Activated CD8-positive, alpha-beta memory T cell treated with anti-CD3 and anti-CD28 coated beads, Interleukin-2, amount 10 ng/mL, durations not matched to agents 7 days and 5 days (primary cell): ENCODE measurements at regions of chr9 and their contacts with region 1.

Region 1: DNA sequence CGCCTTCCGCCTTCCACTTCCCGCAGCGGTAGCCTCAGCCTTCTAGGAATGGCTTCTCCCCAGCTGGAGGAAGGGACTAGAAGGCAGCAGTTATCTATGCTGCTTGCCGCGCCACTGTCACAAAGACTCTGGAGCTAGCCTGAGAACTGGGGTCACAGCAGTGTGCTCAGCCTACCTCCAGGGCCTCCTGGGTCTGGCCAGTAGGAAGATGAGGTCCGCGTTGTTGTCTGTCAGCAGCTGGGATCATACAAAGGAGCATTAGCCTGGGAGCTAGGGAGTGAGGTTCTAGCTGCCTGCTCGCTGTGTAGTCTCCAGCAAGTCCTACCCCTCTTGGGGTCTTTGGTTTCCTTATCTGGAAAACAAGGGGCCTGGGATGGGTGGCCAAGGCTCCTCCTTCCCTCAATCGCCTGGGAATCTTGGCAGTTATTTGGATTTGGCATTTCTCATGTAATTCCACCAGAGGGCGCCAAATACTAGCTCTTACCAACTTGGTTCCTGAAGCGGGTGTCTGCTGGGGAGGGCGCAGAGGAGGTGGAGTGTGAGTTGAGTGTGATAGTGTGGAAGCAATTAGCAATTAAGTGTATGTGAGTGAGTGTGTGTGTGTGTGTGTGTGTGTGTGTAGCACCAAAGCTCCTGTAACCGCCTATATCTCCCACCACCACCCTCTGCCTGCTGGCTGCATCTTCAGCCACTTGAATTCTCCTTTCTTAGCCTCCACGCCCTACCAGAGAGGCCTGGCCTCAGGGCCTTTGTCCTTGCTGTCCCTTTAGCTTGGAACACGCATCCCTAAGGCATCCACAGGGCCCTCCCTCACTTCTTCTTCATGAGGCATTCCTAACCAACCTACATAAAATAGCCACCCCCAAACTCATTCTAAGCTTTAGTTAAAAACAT is 97.1 kb downstream of the ENTREP1 start:
- DNase-seq: peak; percentile 51
- ATAC-seq: peak; percentile 47
- H3K4me3 Mint-ChIP-seq: no peak overlapping the region
- H3K27ac Mint-ChIP-seq: no peak overlapping the region
- H3K4me1 Mint-ChIP-seq: no peaks in the 10 kb centered on the region
- H3K27me3 Mint-ChIP-seq: peaks cover 2% of the 10 kb centered on the region

Region 2: DNA sequence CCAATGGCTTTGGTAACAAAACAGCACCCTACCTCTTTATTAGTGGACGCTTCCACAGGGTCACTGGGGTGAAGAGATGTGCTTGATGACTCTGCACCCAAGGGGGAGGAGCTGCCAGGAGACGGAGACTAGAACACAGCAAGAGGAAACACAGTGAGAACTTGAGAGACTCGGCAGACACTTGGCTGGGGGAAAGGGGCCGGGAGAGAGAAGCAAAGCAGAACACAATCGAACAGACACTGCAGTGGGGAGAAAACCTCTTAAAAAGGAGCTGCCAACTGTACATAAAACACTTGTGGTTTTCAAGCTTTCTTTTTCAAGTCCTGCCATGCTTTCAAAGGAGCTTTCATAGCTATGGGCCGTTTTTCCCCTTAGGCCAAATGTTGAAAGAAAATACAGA is 53.9 kb after region 1 on chr9:
- CTCF ChIA-PET with region 1: no interaction called
- DNase-seq: no peak
- ATAC-seq: peak; percentile 45
- H3K4me3 Mint-ChIP-seq: no peak overlapping the region
- H3K27ac Mint-ChIP-seq: no peak overlapping the region
- H3K4me1 Mint-ChIP-seq: peaks cover 12% of the 10 kb centered on the region
- H3K27me3 Mint-ChIP-seq: peaks cover 20% of the 10 kb centered on the region

Region 3: GRCh38 chr9:69549310-69550202 is 127.4 kb after region 1 on chr9:
- CTCF ChIA-PET with region 1: interaction called, 21 read pairs
- DNase-seq: no peak
- ATAC-seq: no peak
- H3K4me3 Mint-ChIP-seq: no peak overlapping the region
- H3K27ac Mint-ChIP-seq: no peak overlapping the region
- H3K4me1 Mint-ChIP-seq: peaks cover 1% of the 10 kb centered on the region
- H3K27me3 Mint-ChIP-seq: peaks cover 31% of the 10 kb centered on the region

Region 4: GRCh38 chr9:69919461-69920061 is 497.4 kb after region 1 on chr9:
- CTCF ChIA-PET with region 1: interaction called, 20 read pairs
- DNase-seq: no peak
- ATAC-seq: peak; percentile 78
- H3K4me3 Mint-ChIP-seq: no peak overlapping the region
- H3K27ac Mint-ChIP-seq: no peak overlapping the region
- H3K4me1 Mint-ChIP-seq: no peaks in the 10 kb centered on the region
- H3K27me3 Mint-ChIP-seq: peaks cover 17% of the 10 kb centered on the region

Region 5: DNA sequence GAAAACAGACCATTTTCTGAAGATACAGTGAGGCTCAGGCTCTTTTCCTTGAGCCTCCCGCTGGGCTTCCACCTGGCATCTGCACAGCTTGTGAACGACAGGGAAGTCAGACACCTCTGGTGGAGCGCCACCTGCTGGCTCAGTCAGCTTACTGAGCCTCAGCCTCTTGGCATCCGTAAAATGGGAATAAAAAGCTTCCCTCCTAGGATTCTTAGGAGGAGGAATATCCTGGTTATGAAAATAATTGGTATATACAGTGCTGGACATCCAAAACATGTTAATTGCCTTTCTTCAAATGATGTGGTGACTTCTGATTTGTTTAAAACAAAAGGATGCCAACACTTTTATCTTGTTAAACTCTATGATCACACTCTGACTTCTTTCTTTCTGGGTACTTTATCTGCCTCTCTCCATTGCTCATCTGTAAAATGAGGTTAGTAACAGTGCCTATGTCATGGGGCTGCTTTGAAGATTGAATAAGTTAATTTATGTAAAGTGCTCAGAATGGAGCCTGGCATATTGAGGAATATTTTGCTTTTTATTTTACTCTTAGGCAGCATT is 689.0 kb after region 1 on chr9:
- CTCF ChIA-PET with region 1: interaction called, 19 read pairs
- DNase-seq: peak; percentile 65
- ATAC-seq: no peak
- H3K4me3 Mint-ChIP-seq: no peak overlapping the region
- H3K27ac Mint-ChIP-seq: no peak overlapping the region
- H3K4me1 Mint-ChIP-seq: peaks cover 5% of the 10 kb centered on the region
- H3K27me3 Mint-ChIP-seq: peaks cover 21% of the 10 kb centered on the region